K562 (cell line): ENCODE measurements at regions of chr10 and their contacts with region 1.

Region 1: DNA sequence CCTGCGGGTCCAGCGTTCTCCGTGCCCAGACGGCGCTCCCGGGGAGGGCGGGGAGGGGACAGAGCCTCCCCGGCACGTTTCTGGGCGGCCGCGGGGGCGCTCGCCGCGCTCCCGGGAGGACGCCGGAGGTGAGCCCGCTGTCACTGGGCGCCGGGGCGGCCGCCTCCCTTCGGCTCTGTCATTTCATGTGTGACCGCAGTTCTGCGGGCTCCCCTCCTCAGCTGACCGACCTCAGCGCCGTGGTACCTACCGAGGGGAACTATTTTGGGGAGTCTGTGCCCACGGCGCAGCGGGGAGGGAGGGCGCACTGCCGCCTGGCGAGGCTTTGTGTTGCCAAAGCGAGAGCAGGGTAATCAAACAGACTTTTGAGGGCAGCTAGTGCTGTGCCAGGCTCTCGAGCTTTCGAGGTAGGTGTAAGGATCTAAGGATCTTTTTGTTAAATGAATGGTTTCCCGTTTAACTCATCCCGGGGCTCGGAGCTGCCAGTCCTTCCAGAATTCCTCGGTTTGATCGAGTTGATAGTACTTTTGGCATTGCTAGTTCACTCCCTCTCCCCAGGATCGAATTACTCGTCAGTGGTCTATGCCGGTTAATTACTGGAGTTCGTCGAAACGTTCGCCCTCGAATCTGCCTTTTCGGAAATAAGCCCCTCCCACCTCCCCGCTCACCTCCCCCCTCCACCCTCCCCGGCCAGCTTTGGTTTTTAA is 1.9 kb downstream of the ARID5B start:
- DNase-seq: peak; percentile 69 to 80 (median 72)
- ATAC-seq: peak; percentile 85
- H3K4me3 ChIP-seq: peak overlapping the region; percentile 51
- H3K27ac ChIP-seq: peak overlapping the region; percentile 40; the same call in 2 of the 3 replicates
- H3K4me1 ChIP-seq: peaks cover 6 to 12% of the 10 kb centered on the region in 2 experiments
- H3K27me3 ChIP-seq: no peaks in the 10 kb centered on the region
- CTCF ChIP-seq: peak in 2 of 3 experiments; percentile 4 to 39; a peak in 3 of 6 replicates
- EP300 ChIP-seq: no peak
- POLR2A ChIP-seq: no peak
- RAD21 ChIP-seq: no peak

Region 2: GRCh38 chr10:61621605-61622060 is 281.7 kb before region 1 on chr10:
- CTCF ChIA-PET with region 1: no interaction called
- POLR2A ChIA-PET with region 1: no interaction called
- in situ Hi-C with region 1: no loop called
- intact Hi-C with region 1: no loop called
- DNase-seq: peak in 2 of 4 experiments; percentile 14 to 40
- ATAC-seq: peak; percentile 55; the same call in 2 of the 3 replicates
- H3K4me3 ChIP-seq: no peak overlapping the region
- H3K27ac ChIP-seq: no peak overlapping the region
- H3K4me1 ChIP-seq: no peaks in the 10 kb centered on the region
- H3K27me3 ChIP-seq: no peaks in the 10 kb centered on the region; a peak in 2 of 5 replicates
- CTCF ChIP-seq: no peak
- EP300 ChIP-seq: no peak
- POLR2A ChIP-seq: no peak
- RAD21 ChIP-seq: no peak

Region 3: DNA sequence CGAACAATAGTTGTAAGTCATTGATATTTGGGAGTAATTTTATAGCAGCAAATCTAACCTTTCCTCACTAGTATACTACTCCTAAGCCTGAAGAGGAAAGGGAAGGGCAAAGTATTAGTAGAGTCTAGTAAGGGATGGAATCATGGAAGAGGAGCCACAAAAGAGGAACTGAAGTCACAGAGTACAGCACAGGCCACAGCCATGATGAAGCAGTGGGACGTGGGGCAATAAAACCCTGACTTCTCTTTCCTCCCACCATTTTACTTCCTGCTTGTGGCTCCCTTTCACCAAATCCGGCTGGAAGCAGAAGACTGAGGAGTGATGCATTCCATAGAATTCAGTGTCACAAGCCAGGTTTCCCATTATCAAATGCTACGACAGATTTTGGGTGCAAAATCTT is 181.9 kb before region 1 on chr10:
- CTCF ChIA-PET with region 1: no interaction called
- POLR2A ChIA-PET with region 1: no interaction called
- in situ Hi-C with region 1: no loop called
- intact Hi-C with region 1: no loop called
- DNase-seq: no peak
- ATAC-seq: no peak
- H3K4me3 ChIP-seq: no peak overlapping the region
- H3K27ac ChIP-seq: no peak overlapping the region
- H3K4me1 ChIP-seq: no peaks in the 10 kb centered on the region
- H3K27me3 ChIP-seq: no peaks in the 10 kb centered on the region
- CTCF ChIP-seq: no peak
- EP300 ChIP-seq: no peak
- POLR2A ChIP-seq: no peak
- RAD21 ChIP-seq: no peak

Region 4: GRCh38 chr10:62019685-62020315 is 116.4 kb after region 1 on chr10:
- CTCF ChIA-PET with region 1: no interaction called
- POLR2A ChIA-PET with region 1: no interaction called
- in situ Hi-C with region 1: no loop called
- intact Hi-C with region 1: loop called (anchors 5 kb)
- DNase-seq: no peak
- ATAC-seq: no peak
- H3K4me3 ChIP-seq: no peak overlapping the region
- H3K27ac ChIP-seq: no peak overlapping the region
- H3K4me1 ChIP-seq: no peaks in the 10 kb centered on the region
- H3K27me3 ChIP-seq: peaks cover 0 to 4% of the 10 kb centered on the region in 2 experiments; a peak in 1 of 5 replicates
- CTCF ChIP-seq: no peak
- EP300 ChIP-seq: no peak
- POLR2A ChIP-seq: no peak
- RAD21 ChIP-seq: no peak

Region 5: DNA sequence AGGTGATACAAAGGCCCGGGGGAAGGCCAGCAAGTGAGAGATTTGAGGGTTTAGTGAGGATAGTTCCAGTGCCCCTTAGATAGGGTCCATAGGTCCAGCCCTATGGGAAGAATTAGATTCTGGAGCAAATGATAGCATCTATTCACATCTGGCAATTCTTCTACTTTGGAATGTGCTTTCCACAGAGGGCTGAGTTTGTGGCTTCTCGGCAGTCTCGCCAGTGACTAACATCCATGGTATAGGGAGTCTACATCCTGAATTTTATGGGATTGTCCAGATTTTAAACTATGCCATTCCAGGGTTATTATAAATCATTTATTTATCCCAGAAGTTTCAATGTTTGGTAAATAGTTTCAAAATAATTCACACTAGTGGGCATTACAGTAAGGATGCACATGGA is 693.9 kb after region 1 on chr10:
- CTCF ChIA-PET with region 1: no interaction called
- POLR2A ChIA-PET with region 1: no interaction called
- in situ Hi-C with region 1: no loop called
- intact Hi-C with region 1: no loop called
- DNase-seq: no peak
- ATAC-seq: no peak
- H3K4me3 ChIP-seq: no peak overlapping the region
- H3K27ac ChIP-seq: no peak overlapping the region
- H3K4me1 ChIP-seq: no peaks in the 10 kb centered on the region
- H3K27me3 ChIP-seq: no peaks in the 10 kb centered on the region
- CTCF ChIP-seq: no peak
- EP300 ChIP-seq: no peak
- POLR2A ChIP-seq: no peak
- RAD21 ChIP-seq: no peak